Heart right ventricle (tissue), 16 donors: ENCODE measurements at regions of chr17 and their contacts with region 1.

Region 1: DNA sequence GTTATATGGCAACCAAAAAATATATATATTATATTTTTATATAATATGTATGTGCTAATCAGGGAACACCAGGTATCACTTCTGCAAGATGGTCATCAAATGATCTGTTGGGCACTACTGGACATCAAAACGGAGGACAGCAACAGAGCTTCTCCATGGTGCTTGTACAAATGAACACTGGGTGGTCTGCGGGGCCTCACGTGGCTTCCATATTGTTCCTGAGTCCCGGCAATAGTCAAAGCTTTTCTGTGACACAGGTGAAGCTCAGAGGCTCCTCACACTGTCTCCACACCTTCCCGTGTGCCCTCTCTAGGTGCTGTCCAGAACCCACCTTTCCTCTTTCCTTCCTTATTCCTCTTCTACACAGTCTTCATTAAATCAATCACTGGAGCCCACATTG is 149.9 kb upstream of the PIRT start:
- DNase-seq: no peak
- ATAC-seq: no peak
- H3K4me3 ChIP-seq: no peak overlapping the region
- H3K27ac ChIP-seq: no peak overlapping the region
- H3K4me1 ChIP-seq: no peaks in the 10 kb centered on the region
- H3K27me3 ChIP-seq: peaks cover 0 to 5% (median 0%) of the 10 kb centered on the region in 7 donors
- CTCF ChIP-seq: no peak

Region 2: DNA sequence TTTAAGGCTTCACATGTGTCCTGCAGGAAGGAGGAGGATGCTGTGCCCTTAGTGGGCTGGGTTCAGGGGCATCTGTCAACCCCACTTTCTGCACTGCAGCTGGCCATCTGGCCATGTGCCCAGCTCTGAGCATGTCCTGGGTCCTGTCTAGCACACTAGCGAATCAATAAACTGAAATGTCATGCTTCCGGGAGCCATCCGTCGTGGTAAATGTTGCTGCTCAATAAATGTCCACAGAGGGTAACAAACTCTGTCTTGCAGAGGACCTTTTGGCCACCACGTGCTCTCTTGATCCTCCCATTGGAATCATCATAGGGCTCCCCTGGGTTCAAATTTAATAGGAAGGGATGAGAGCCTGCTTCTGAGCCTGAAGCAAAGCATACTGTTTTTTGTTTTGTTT is 18.7 kb after region 1 on chr17:
- intact Hi-C with region 1: loop called in 1 of 10 experiments (anchors 2 kb)
- DNase-seq: peak in 1 of 2 donors; percentile 12
- ATAC-seq: no peak
- H3K4me3 ChIP-seq: no peak overlapping the region
- H3K27ac ChIP-seq: no peak overlapping the region
- H3K4me1 ChIP-seq: no peaks in the 10 kb centered on the region
- H3K27me3 ChIP-seq: peaks cover 0 to 21% (median 0%) of the 10 kb centered on the region in 7 donors
- CTCF ChIP-seq: no peak